ENCODE measurements at regions of chr17 and their contacts with region 1.

Region 1: GRCh38 chr17:69870091-69870530 is 204.9 kb upstream of the KCNJ16 start:
- DNase-seq: peak; percentile 83
- H3K4me3 ChIP-seq: no peak overlapping the region
- H3K27ac ChIP-seq: peak overlapping the region; percentile 39
- H3K4me1 ChIP-seq: peaks cover 38% of the 10 kb centered on the region
- H3K27me3 ChIP-seq: no peaks in the 10 kb centered on the region
- CTCF ChIP-seq: no peak
- POLR2A ChIP-seq: peak; percentile 26

Region 2: GRCh38 chr17:69761751-69762321 is 108.3 kb before region 1 on chr17:
- CTCF ChIA-PET with region 1: no interaction called
- POLR2A ChIA-PET with region 1: no interaction called
- dilution Hi-C with region 1: no loop called
- intact Hi-C with region 1: loop called (anchors 5 kb)
- DNase-seq: peak; percentile 86
- H3K4me3 ChIP-seq: no peak overlapping the region
- H3K27ac ChIP-seq: peak overlapping the region; percentile 91
- H3K4me1 ChIP-seq: peaks cover 21% of the 10 kb centered on the region
- H3K27me3 ChIP-seq: no peaks in the 10 kb centered on the region
- CTCF ChIP-seq: no peak
- POLR2A ChIP-seq: no peak

Region 3: DNA sequence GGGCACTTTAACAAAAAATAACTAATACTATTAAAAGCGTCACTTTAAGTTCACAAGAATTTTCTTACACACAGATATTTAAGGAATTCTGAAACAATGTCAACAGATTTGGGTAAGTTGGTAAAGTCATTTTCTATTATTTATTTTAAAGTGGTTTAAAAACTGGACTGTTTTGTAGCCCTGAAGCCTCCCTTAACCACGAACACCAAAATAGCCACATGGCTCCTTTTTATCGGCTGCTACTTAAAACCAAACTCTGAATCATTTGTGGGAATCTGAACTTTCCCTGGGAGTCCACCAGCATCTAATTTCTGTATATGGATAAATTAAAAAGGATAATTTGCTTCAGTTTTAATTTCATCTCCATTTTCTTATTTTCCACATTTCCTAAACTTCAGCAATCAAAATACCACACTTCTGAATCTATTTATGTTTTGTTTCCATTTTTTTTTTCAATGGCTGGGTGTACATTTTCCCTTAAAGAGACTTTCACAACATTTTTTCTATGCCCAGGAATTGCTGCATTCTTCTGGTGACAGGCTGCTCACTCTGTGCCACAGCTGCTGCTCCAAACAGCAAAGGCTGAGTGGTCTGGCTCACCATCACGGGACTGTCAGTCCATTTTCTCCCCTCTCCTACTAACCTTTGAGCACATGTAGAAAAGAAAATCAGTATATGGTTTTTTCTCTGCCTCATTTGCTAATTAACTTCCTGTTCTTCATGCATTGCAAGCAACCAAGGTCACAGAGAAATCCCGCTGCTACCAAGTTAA is 50.6 kb before region 1 on chr17:
- CTCF ChIA-PET with region 1: no interaction called
- POLR2A ChIA-PET with region 1: no interaction called
- dilution Hi-C with region 1: no loop called
- intact Hi-C with region 1: no loop called
- DNase-seq: no peak
- H3K4me3 ChIP-seq: no peak overlapping the region
- H3K27ac ChIP-seq: no peak overlapping the region
- H3K4me1 ChIP-seq: no peaks in the 10 kb centered on the region
- H3K27me3 ChIP-seq: no peaks in the 10 kb centered on the region
- CTCF ChIP-seq: no peak
- POLR2A ChIP-seq: no peak

Region 4: GRCh38 chr17:69857412-69857835 is 12.7 kb before region 1 on chr17:
- CTCF ChIA-PET with region 1: interaction called, 10 read pairs
- POLR2A ChIA-PET with region 1: no interaction called
- dilution Hi-C with region 1: no loop called
- intact Hi-C with region 1: loop called (anchors 1 kb)
- DNase-seq: peak; percentile 95
- H3K4me3 ChIP-seq: no peak overlapping the region
- H3K27ac ChIP-seq: peak overlapping the region; percentile 35
- H3K4me1 ChIP-seq: peaks cover 14% of the 10 kb centered on the region
- H3K27me3 ChIP-seq: no peaks in the 10 kb centered on the region
- CTCF ChIP-seq: no peak
- POLR2A ChIP-seq: peak; percentile 53

Region 5: GRCh38 chr17:70040336-70040735 is 170.2 kb after region 1 on chr17:
- CTCF ChIA-PET with region 1: interaction called, 3 read pairs
- POLR2A ChIA-PET with region 1: no interaction called
- dilution Hi-C with region 1: no loop called
- intact Hi-C with region 1: loop called (anchors 1 kb)
- DNase-seq: peak; percentile 94
- H3K4me3 ChIP-seq: no peak overlapping the region
- H3K27ac ChIP-seq: peak overlapping the region; percentile 90
- H3K4me1 ChIP-seq: peaks cover 29% of the 10 kb centered on the region
- H3K27me3 ChIP-seq: no peaks in the 10 kb centered on the region
- CTCF ChIP-seq: no peak
- POLR2A ChIP-seq: no peak

Region 6: DNA sequence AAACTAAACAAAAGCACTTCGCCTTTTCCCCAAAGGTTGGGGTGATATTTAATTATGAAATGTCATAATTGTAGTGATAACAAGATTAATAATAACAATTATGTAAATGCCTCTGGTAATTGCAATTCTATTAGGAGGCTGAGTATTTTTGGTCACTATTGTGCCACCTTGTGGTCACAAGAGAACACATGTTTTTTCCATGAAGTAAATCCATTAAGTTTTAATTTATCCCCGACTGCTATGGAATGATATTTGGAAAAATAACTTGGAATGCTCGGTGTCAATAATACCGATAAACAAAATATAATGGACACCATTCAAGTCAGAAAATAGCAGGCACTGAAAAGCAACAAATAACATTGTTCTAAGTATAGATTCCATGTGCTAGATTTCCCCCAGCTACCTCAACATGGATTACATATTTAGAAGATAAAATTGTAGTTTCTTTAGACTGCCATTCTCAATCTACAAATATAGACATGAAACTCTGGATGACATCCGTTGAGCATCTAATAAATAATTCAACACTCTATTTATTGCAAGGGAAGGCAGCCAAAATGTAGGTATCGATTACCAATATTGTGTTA is 274.2 kb after region 1 on chr17:
- CTCF ChIA-PET with region 1: interaction called, 11 read pairs
- POLR2A ChIA-PET with region 1: no interaction called
- dilution Hi-C with region 1: no loop called
- intact Hi-C with region 1: loop called (anchors 2 kb)
- DNase-seq: peak; percentile 76
- H3K4me3 ChIP-seq: no peak overlapping the region
- H3K27ac ChIP-seq: no peak overlapping the region
- H3K4me1 ChIP-seq: peaks cover 2% of the 10 kb centered on the region
- H3K27me3 ChIP-seq: no peaks in the 10 kb centered on the region
- CTCF ChIP-seq: peak; percentile 5 to 16
- POLR2A ChIP-seq: no peak

Region 7: GRCh38 chr17:70622368-70623260 is 752.5 kb after region 1 on chr17:
- CTCF ChIA-PET with region 1: no interaction called
- POLR2A ChIA-PET with region 1: no interaction called
- dilution Hi-C with region 1: no loop called
- intact Hi-C with region 1: loop called (anchors 5 kb)
- DNase-seq: peak; percentile 76
- H3K4me3 ChIP-seq: no peak overlapping the region
- H3K27ac ChIP-seq: no peak overlapping the region
- H3K4me1 ChIP-seq: peaks cover 5% of the 10 kb centered on the region
- H3K27me3 ChIP-seq: no peaks in the 10 kb centered on the region
- CTCF ChIP-seq: peak; percentile 64 to 79
- POLR2A ChIP-seq: no peak